ENCODE measurements at regions of chr5 and their contacts with region 1.

Region 1: DNA sequence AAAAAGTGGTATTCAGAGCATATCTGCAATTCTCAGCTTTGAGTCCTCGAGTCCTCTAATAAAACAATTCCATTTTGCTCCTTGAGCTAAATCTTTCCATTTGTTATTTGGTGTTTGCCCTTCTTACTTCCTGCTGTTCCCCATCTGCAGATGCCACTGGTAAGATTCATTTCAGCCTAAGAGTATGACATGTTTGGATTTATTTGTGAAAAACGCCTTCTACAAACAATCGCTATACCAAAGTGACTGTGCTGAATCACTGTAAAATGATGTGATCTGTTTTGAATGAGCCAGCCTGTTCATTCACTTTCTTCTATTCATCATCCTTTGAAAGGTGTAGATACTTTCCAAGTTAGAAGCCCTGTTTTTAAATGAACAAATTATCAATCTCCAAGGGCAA is 27.7 kb downstream of the KCTD16 start:
- DNase-seq: no peak
- ATAC-seq: no peak
- H3K4me3 ChIP-seq: no peak overlapping the region
- H3K4me3 Mint-ChIP-seq: no peak overlapping the region
- H3K27ac ChIP-seq: no peak overlapping the region
- H3K27ac Mint-ChIP-seq: no peak overlapping the region
- H3K4me1 ChIP-seq: no peaks in the 10 kb centered on the region
- H3K4me1 Mint-ChIP-seq: no peaks in the 10 kb centered on the region
- H3K27me3 ChIP-seq: peaks cover 0 to 6% of the 10 kb centered on the region in 2 experiments
- H3K27me3 Mint-ChIP-seq: peaks cover 36% of the 10 kb centered on the region
- CTCF ChIP-seq: no peak

Region 2: DNA sequence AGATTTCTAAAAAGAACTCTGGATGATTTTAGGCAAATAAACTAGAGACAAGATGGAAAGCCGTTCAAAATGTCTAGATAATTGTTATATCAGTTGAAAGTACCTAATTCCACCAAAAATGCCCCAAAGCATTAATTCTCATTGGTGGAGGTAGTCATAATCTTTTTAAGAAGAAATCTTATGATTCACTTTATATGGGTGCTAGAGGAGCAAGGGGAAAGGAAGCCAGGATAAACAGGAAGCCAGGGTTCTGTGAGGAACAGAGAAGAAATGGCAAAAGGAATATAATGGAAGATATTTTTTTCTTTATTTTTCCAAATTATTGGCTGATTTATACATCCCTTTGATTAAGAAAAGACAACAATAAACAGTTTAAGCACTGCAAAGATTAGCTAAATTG is 35.7 kb before region 1 on chr5:
- CTCF ChIA-PET with region 1: no interaction called
- POLR2A ChIA-PET with region 1: no interaction called
- intact Hi-C with region 1: loop called in 1 of 2 experiments (anchors 5 kb)
- DNase-seq: no peak
- ATAC-seq: no peak
- H3K4me3 ChIP-seq: no peak overlapping the region
- H3K4me3 Mint-ChIP-seq: no peak overlapping the region
- H3K27ac ChIP-seq: no peak overlapping the region
- H3K27ac Mint-ChIP-seq: no peak overlapping the region
- H3K4me1 ChIP-seq: no peaks in the 10 kb centered on the region
- H3K4me1 Mint-ChIP-seq: peaks cover 22% of the 10 kb centered on the region
- H3K27me3 ChIP-seq: no peaks in the 10 kb centered on the region
- H3K27me3 Mint-ChIP-seq: no peaks in the 10 kb centered on the region
- CTCF ChIP-seq: no peak